Endothelial cell of umbilical vein (primary cell): ENCODE measurements at regions of chr19 and their contacts with region 1.

Region 1: DNA sequence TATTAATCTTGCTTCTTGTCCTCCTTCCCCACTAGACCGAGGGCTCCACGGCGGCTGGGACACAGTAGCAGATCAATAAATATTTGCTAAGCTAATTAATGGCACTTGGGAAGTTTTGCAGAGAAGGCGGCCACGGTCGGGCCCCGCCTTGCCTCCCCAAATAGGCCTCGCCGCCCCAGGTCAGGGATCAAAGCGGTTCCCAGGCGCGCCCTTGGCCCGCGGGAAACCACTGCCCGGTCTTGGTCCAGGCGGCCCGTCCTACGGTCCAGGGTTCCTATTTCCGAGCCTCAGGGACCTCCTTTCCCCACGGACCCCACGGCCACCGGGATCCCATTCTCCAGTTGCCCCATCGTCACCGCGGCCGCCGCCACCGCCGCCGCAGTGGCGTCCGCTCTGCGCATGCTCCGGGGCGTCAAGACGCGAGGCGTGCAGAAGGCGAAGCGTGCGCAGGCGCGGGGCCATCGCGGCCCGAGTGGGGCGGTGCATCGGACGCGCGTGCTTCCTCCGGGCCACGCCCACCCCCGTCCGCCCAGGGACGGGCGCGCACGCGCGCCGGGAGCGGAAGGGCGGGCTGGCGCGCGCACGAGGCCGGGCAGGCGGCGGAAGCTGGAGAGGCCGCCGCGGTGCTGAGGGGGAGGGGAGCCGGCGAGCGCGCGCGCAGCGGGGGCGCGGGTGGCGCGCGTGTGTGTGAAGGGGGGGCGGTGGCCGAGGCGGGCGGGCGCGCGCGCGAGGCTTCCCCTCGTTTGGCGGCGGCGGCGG is at the start of gene SMARCA4:
- DNase-seq: peak; percentile 97
- H3K4me3 ChIP-seq: peak within 1 kb of the TSS; percentile 72 to 100 (median 98)
- H3K27ac ChIP-seq: peak within 1 kb of the TSS; percentile 51
- H3K4me1 ChIP-seq: peaks cover 9% of the 10 kb centered on the region
- H3K27me3 ChIP-seq: no peaks in the 10 kb centered on the region
- CTCF ChIP-seq: no peak
- POLR2A ChIP-seq: peak; percentile 94
- total RNA-seq, gene SMARCA4: 177 and 178 TPM in 2 replicates

Region 2: DNA sequence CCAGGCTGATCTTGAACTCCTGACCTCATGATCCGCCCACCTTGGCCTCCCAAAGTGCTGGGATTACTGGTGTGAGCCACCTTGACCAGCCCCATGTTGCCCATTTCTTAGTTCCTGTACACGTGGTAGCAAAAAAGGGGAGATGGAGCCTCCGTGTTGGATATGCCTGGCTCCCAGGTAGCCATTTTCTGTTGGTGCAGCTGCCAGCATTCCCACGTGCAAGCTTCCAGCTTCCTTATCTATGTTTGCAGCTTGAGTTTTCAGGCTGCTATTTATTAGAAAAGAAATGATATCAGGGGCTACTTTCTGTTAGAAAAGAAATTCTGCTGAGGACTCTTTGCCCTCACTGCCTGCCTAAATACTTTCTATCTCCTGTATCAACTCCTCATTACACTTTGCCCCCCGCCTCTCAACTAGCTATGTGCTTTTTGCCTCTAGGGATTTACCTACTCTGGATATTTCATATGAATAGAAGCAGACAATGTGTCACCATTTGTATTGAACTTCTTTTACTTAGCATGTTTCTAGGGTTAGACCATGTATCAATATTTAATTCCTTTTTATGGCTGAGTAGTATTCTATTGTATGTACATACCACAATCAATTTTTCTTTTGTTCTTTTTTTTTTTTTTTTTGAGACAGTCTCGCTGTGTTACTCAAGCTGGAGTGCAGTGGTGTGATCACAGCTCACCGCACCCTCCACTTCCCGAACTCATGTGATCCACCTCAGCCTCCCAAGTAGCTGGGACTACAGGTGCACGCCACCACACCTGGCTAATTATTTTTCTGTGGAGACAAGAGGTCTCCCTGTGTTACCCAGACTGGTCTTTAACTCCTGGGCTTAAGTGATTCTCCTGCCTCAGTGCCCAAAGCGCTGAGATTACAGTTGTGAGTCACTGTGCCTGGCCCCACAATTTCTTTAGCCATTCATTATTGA is 121.1 kb before region 1 on chr19:
- CTCF ChIA-PET with region 1: no interaction called
- POLR2A ChIA-PET with region 1: no interaction called
- dilution Hi-C with region 1: no loop called
- intact Hi-C with region 1: no loop called
- DNase-seq: no peak
- H3K4me3 ChIP-seq: no peak overlapping the region
- H3K27ac ChIP-seq: no peak overlapping the region
- H3K4me1 ChIP-seq: peaks cover 9% of the 10 kb centered on the region
- H3K27me3 ChIP-seq: no peaks in the 10 kb centered on the region
- CTCF ChIP-seq: no peak
- POLR2A ChIP-seq: no peak

Region 3: DNA sequence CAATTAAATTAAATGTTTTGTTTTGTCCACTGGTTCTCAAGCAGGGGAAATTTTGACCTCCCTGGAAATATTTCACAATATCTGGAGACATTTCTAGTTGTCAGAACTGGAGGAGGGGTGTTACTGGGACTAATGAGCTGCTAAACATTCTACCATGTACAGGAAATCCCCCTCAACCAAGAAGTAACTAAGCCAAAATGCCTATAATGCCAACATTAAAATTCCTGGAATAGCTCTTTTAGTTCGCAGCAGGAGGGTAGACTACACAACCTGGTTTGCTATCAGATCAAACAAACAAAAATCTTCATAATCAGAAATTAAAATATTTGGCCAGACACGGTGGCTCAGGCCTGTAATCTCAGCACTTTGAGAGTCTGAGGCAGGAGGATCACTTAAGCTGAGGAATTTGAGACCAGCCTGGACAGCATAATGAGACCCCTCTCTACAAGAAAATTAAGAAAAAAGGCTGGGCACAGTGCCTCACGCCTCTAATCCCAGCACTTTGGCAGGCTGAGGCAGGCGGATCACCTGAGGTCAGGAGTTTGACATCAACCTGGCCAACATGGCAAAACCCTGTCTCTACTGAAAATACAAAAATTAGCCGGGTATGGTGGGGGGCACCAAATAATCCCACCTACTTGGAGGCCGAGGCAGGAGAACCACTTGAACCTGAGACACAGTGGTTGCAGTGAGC is 13.4 kb before region 1 on chr19:
- CTCF ChIA-PET with region 1: interaction called, 35 read pairs
- POLR2A ChIA-PET with region 1: no interaction called
- dilution Hi-C with region 1: no loop called
- intact Hi-C with region 1: loop called (anchors 1 kb)
- DNase-seq: no peak
- H3K4me3 ChIP-seq: no peak overlapping the region
- H3K27ac ChIP-seq: no peak overlapping the region
- H3K4me1 ChIP-seq: no peaks in the 10 kb centered on the region
- H3K27me3 ChIP-seq: no peaks in the 10 kb centered on the region
- CTCF ChIP-seq: no peak
- POLR2A ChIP-seq: no peak